Lower leg skin (tissue), 4 donors: ENCODE measurements at regions of chr15 and their contacts with region 1.

Region 1: DNA sequence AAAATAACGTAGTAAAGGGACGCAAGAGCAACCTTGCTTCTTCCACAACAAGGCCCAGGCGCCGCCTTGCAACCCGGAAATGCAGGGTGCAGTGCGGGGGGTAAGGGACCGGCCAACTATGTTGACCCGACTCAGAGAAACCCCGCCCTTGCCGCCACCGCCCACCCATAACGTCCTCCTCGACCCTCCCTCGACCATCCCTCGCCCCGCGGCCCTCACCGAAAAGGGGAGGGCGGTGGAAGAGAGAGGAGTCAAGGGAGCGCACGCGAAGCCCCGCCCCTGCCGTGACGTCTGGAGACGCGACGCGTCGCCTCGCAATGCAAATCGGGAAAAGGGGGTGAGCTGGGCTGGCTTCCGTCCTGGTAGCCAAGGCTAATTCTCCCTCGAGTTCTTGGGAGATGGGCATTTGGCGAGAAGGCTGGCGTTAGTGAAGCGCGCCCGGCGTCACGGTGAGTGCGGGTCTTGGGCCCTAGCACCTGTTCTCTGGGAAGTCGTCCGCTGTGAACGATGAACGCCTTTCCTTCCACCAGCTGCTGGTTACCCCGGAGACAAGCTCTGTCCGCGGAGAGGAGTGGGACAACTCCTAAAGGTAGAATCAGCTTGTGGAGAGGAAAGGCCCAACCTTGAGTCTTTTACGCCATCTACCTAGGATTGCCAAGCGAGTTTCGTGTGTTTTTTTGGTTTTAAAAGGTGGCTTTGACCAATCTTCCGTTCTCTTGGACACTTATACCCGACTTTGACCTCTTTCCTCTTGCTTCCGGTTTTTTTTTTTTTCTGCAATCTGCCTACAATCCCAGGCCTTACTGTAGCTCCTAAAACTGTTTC is at the start of gene USP8:
- DNase-seq: peak; percentile 95 to 99
- H3K4me3 ChIP-seq: peak within 1 kb of the TSS; percentile 82
- CTCF ChIP-seq: no peak
- POLR2A ChIP-seq: peak in 1 of 2 donors; percentile 60
- total RNA-seq, gene USP8: 34.8 to 67.0 (median 44.7) TPM

Region 2: GRCh38 chr15:50107591-50108408 is 316.5 kb before region 1 on chr15:
- intact Hi-C with region 1: no loop called
- DNase-seq: peak in 1 of 2 donors; percentile 51
- H3K4me3 ChIP-seq: no peak overlapping the region
- CTCF ChIP-seq: no peak
- POLR2A ChIP-seq: no peak

Region 3: GRCh38 chr15:50354838-50355618 is 69.2 kb before region 1 on chr15 and contains the start of gene GABPB1:
- intact Hi-C with region 1: loop called (anchors 10 kb)
- DNase-seq: peak; percentile 84 to 96
- H3K4me3 ChIP-seq: peak within 1 kb of the TSS; percentile 98
- CTCF ChIP-seq: no peak
- POLR2A ChIP-seq: peak in 1 of 2 donors; percentile 80
- total RNA-seq, gene GABPB1: 16.9 to 20.2 (median 17.8) TPM